GM10248 (cell line): ENCODE measurements at regions of chr13 and their contacts with region 1.

Region 1: GRCh38 chr13:27826379-27827353 is 34.4 kb downstream of the GSX1 start:
- DNase-seq: peak; percentile 83
- CTCF ChIP-seq: peak; percentile 97

Region 2: GRCh38 chr13:27362064-27362883 is 464.4 kb before region 1 on chr13:
- CTCF ChIA-PET with region 1: interaction called, 324 read pairs
- POLR2A ChIA-PET with region 1: no interaction called
- DNase-seq: peak; percentile 88
- CTCF ChIP-seq: peak; percentile 88

Region 3: DNA sequence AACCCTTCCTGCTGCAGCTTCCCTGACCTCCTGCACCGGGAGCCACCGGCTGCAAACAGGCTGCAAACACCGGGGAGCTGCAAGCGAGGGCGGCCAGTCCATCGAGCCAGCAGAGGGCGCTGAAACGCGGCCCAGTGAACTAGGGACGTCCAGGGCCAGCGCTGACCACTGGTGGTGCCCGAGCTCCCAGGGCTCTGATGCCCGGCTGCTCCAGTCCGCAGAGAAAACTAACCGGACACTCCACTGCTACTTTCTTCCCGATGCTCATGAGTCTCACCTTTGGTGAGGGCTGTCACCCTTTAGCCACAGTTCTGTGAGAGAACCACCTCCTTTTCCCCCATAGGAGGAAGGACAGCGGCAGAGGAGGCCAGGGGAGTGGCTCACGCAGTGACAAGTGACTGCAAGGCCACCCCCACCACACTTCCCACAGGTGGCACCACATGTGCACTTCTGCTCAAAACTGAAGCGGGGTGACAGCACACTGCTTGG is 293.5 kb before region 1 on chr13:
- CTCF ChIA-PET with region 1: interaction called, 130 read pairs
- POLR2A ChIA-PET with region 1: no interaction called
- DNase-seq: peak; percentile 67
- CTCF ChIP-seq: peak; percentile 98

Region 4: DNA sequence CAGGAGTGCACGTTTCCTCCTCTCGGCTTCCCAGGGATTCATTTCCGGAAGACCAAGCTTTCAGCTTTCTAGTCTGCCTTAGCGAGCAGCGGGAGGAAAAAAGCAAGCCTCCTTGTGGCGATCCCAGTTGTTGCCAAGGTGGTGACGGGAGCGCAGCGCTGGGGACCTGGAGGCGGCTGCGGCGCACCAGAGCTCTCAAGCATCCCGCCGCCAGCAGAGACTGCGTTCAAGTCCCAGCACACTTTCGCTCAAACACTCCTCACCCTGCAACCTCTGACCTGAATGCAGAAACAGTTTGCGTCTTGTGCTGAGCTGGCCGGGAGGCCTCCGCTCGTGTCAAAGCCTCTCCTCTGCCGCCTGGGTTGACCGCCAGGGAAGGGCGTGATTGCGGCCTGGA is 29.4 kb before region 1 on chr13:
- CTCF ChIA-PET with region 1: interaction called, 27 read pairs
- POLR2A ChIA-PET with region 1: no interaction called
- DNase-seq: no peak
- CTCF ChIP-seq: no peak

Region 5: GRCh38 chr13:27923794-27924528 is 97.3 kb after region 1 on chr13:
- CTCF ChIA-PET with region 1: no interaction called
- POLR2A ChIA-PET with region 1: no interaction called
- DNase-seq: peak; percentile 31
- CTCF ChIP-seq: no peak

Region 6: DNA sequence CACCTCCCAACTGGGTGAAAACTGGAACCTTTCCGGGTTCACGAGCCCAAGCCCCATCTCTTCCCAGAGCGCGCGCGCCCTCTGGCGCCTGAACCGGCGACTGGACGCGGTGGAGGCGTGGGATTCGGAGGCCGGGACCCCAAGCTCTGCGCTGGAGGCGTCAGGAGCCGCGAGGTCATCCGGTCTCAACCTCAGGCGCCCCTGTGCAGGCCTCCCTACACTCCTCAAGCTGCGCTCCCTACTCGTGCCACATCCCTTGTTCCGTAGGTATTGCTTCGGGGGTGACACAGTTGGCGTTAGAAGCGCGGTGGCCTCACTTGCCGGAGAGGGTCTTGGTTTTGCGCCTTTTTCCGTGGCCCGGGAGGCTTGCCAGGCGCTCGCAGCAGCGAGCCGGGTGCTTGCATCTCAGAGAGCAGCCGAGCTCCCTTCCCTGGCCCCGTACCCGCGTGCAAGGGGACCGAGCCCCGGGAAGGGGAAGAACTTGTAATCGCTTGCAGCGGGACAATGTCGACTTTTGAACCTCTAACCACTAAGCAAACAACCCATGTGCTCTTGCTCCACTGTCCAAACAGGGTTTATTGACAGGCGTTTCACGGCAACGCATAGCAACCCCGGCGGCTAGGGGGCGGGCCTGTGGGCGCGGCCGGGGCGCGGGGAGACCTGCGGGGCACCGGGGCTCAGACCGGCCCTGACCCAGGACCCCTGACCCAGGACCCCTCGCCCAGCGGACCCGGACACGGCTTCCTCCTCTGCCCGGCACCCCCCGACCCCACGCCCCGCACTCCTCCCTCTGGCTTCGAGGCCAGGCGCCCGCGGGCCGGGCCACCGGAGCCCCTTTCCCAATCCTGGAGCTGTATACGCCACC is 133.9 kb after region 1 on chr13:
- CTCF ChIA-PET with region 1: interaction called, 70 read pairs
- POLR2A ChIA-PET with region 1: no interaction called
- DNase-seq: peak; percentile 72
- CTCF ChIP-seq: peak; percentile 57

Region 7: GRCh38 chr13:28282451-28282850 is 455.8 kb after region 1 on chr13:
- CTCF ChIA-PET with region 1: no interaction called
- POLR2A ChIA-PET with region 1: no interaction called
- DNase-seq: peak; percentile 27
- CTCF ChIP-seq: no peak